A549 (cell line): ENCODE measurements at regions of chr17 and their contacts with region 1.

Region 1: DNA sequence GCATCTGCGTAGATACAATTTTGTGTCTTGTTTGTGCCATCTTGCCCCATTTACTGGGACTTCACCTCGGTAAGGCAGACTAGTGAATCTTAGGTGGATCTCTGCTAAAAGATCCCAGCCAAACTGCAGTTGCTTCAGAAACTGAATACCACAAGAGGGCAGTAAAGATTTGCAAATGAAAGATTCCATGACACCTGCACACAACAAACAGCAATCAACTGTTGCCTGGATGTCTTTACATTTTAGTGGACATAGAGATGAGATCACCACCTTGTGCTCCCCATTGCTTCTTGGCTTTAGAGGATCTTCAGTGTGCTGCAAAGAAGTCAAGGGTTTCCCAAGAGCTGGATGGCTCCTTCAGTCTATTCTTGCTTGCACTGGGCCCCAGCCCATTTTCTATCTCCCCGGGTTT is 119.2 kb upstream of the CACNG5 start:
- DNase-seq: peak; percentile 80 to 89
- ATAC-seq: peak; percentile 71 to 81
- H3K4me3 ChIP-seq: no peak overlapping the region
- H3K27ac ChIP-seq: no peak overlapping the region
- H3K4me1 ChIP-seq: peaks cover 32% of the 10 kb centered on the region
- CTCF ChIP-seq: peak; percentile 90
- EP300 ChIP-seq: no peak
- POLR2A ChIP-seq: no peak
- RAD21 ChIP-seq: peak; percentile 91

Region 2: GRCh38 chr17:66704858-66705520 is 10.8 kb before region 1 on chr17:
- CTCF ChIA-PET with region 1: interaction called, 13 read pairs
- POLR2A ChIA-PET with region 1: no interaction called
- DNase-seq: no peak
- ATAC-seq: no peak
- H3K4me3 ChIP-seq: no peak overlapping the region
- H3K27ac ChIP-seq: no peak overlapping the region
- H3K4me1 ChIP-seq: peaks cover 18% of the 10 kb centered on the region
- CTCF ChIP-seq: no peak
- EP300 ChIP-seq: no peak
- POLR2A ChIP-seq: no peak
- RAD21 ChIP-seq: no peak

Region 3: DNA sequence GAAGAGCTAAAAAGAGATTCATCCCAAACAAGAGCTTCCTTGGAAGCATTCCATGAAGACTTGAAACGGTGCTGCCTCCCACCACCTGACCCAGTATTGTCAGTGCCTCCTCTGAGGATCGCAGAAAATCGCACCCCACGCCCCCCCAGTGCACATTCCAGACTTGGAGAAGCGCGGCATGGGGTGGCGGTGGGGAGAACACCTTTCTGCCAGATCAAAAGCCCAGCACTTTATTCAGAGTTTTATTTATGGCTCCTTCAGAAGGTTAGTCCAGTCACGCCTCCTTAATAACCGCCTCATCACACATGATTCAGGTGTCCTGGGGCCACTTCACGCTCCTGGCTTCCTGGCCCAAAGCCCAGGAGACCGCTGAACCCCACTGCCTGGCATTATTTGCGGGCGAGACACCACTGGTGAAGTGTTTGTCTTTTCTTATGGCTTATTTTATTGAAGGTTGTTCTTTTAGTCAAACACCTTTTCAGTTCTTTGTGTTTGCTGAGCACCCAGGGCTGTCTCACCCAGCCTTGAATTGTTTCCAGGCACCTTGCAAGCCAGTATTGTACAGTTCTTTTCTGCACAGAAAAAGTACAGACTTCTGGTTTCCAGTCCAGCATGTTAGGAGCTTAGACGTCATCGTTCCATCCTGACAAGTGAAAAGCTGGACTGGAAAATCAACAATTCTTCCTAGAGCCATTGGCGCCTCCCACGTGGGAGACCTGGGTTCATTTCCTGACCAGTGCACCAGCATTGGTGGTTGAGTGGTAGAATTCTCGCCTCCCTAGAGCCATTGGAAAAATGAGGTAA is 39.6 kb after region 1 on chr17:
- CTCF ChIA-PET with region 1: no interaction called
- POLR2A ChIA-PET with region 1: no interaction called
- DNase-seq: no peak
- ATAC-seq: no peak
- H3K4me3 ChIP-seq: no peak overlapping the region
- H3K27ac ChIP-seq: no peak overlapping the region
- H3K4me1 ChIP-seq: no peaks in the 10 kb centered on the region
- CTCF ChIP-seq: no peak
- EP300 ChIP-seq: no peak
- POLR2A ChIP-seq: no peak
- RAD21 ChIP-seq: no peak

Region 4: GRCh38 chr17:66826856-66827255 is 111.1 kb after region 1 on chr17:
- CTCF ChIA-PET with region 1: no interaction called
- POLR2A ChIA-PET with region 1: no interaction called
- DNase-seq: no peak
- ATAC-seq: no peak
- H3K4me3 ChIP-seq: no peak overlapping the region
- H3K27ac ChIP-seq: no peak overlapping the region
- H3K4me1 ChIP-seq: no peaks in the 10 kb centered on the region
- CTCF ChIP-seq: no peak
- EP300 ChIP-seq: no peak
- POLR2A ChIP-seq: no peak
- RAD21 ChIP-seq: no peak

Region 5: DNA sequence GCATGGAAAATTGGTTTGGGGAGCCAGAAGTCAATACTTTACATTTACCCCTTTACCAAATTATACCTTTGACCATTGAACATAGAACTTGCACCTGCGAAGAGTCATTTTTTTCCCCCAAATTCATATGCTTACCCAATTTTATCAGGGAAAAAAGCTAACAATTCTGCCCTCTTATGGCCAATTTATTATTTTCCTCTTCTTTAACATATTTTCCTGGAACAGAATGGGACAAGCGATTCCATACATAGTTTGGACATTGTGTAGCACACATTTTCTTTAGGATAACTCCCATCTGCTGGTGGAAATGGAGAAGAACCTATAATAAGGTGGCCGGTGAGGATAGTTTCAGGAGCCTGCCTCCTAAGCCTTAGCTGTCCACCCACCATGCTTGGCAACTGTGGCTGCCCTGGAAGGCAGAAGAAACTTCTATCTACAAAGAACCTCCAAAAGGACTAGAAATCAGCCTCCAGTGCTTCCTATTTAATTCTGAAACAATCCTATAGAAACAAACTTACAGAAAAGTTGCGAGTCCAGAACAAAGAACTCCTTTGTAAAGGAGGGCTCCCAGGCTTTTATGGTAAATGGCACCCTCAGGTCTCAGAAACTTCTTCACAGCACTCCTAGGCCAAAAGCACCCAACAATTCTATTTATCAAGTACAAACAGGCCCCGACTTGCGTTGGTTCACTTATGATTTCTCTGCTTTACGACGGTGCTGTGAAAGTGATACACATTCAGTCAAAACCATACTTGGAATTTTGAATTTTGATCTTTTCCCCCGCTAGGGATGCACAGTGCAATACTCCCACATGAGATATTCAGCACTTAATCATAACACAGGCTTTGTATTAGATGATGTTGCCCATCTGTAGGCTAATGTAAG is 184.6 kb after region 1 on chr17:
- CTCF ChIA-PET with region 1: interaction called, 36 read pairs
- POLR2A ChIA-PET with region 1: no interaction called
- DNase-seq: peak; percentile 32 to 39
- ATAC-seq: peak in 1 of 2 experiments; percentile 30; a peak in 3 of 6 replicates
- H3K4me3 ChIP-seq: no peak overlapping the region
- H3K27ac ChIP-seq: 0 out of 6 replicates have a peak overlapping the region, but pooled peaks of 1 of the 2 experiments have one; percentile 9
- H3K4me1 ChIP-seq: peaks cover 19% of the 10 kb centered on the region
- CTCF ChIP-seq: peak; percentile 82
- EP300 ChIP-seq: no peak
- POLR2A ChIP-seq: no peak
- RAD21 ChIP-seq: peak; percentile 71 to 72

Region 6: DNA sequence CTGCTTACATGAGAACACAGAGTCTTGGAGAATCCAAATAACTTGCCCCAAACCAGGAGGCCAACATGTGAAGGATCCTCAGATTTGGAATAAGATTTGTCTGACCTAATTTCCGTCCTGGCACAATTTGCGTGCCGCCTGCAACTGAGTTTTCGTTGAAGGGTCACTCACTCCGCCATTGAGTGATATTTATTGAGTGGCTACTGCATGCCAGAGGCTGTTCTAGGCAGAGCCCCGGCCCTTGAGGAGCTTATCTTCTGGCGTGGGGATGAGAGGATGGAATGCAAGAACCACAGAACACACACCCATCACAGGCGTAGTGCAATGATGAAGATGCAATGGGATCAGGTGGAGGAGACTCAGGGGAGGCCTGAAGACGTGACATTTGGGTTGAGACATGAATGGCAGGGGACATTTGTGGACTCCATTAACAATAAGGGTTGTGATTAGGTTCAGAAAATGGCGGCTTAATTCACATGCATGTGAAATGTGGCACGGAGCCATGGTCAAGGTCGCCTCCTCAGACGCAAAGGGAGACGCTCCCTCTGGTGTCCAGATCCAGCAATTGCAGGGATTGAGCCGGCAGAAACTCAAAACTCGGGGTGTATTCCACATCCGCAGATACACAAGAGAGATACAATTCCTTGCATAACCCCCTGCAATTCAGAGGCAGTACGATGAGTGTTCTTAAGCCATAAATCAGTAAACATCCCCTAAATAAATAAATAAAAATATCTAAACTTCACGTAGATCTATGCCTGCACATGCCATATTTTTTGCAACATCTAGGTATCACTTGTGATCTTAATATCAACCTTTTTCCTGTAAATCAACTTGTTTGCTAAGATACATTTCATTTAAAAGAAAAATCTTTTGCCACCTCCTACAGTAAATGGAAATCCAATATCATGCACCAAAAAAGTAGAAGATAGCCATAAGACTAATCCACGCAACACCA is 190.8 kb after region 1 on chr17:
- CTCF ChIA-PET with region 1: interaction called, 28 read pairs
- POLR2A ChIA-PET with region 1: no interaction called
- DNase-seq: peak; percentile 71 to 88
- ATAC-seq: peak in 1 of 2 experiments; percentile 28; a peak in 3 of 6 replicates
- H3K4me3 ChIP-seq: no peak overlapping the region
- H3K27ac ChIP-seq: peak overlapping the region; percentile 77 to 81
- H3K4me1 ChIP-seq: peaks cover 31% of the 10 kb centered on the region
- CTCF ChIP-seq: peak; percentile 96
- EP300 ChIP-seq: no peak
- POLR2A ChIP-seq: no peak
- RAD21 ChIP-seq: peak; percentile 90 to 96